Activated T-helper 2 cell treated with anti-CD3 and anti-CD28 coated beads, Interferon-gamma antibody, Interleukin-2, Interleukin-4, amounts not matched to agents 10 μg/mL and 5 μg/mL and 100 μg/mL, durations not matched to agents 14 hours and 24 hours and 36 hours (primary cell): ENCODE measurements at regions of chr5 and their contacts with region 1.

Region 1: GRCh38 chr5:164153469-164154172 is 648.2 kb downstream of the MAT2B start:
- DNase-seq: no peak
- H3K4me3 Mint-ChIP-seq: no peak overlapping the region
- H3K27ac Mint-ChIP-seq: no peak overlapping the region
- H3K4me1 Mint-ChIP-seq: no peaks in the 10 kb centered on the region
- H3K27me3 Mint-ChIP-seq: no peaks in the 10 kb centered on the region

Region 2: DNA sequence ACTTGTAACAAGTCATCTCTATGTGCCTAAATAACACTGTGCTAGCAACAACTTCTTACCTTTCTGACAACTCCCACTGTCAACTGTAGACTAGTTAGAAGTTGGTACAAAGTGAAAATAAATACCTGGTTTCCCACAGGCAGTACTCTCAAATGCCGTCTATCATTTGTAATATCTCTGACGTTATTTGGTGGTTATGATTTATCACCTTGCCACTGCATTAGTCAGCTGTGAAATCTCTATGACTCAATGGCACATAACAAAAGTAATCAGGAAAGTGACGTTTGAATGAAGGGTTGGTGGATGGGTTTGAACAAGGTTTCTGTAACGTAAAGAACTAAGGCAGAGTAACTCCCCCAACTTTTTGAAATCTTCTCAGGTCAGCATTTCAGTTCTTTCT is 55.9 kb before region 1 on chr5:
- intact Hi-C with region 1: no loop called
- DNase-seq: no peak
- H3K4me3 Mint-ChIP-seq: no peak overlapping the region
- H3K27ac Mint-ChIP-seq: no peak overlapping the region
- H3K4me1 Mint-ChIP-seq: no peaks in the 10 kb centered on the region
- H3K27me3 Mint-ChIP-seq: no peaks in the 10 kb centered on the region

Region 3: GRCh38 chr5:164191240-164191639 is 37.6 kb after region 1 on chr5:
- intact Hi-C with region 1: loop called (anchors 1 kb)
- DNase-seq: no peak
- H3K4me3 Mint-ChIP-seq: no peak overlapping the region
- H3K27ac Mint-ChIP-seq: no peak overlapping the region
- H3K4me1 Mint-ChIP-seq: no peaks in the 10 kb centered on the region
- H3K27me3 Mint-ChIP-seq: no peaks in the 10 kb centered on the region